Right ventricle myocardium superior (tissue), 1 donor: ENCODE measurements at regions of chr9 and their contacts with region 1.

Region 1: GRCh38 chr9:14768405-14769229 is 46.1 kb upstream of the CER1 start:
- DNase-seq: no peak
- ATAC-seq: peak; percentile 62

Region 2: DNA sequence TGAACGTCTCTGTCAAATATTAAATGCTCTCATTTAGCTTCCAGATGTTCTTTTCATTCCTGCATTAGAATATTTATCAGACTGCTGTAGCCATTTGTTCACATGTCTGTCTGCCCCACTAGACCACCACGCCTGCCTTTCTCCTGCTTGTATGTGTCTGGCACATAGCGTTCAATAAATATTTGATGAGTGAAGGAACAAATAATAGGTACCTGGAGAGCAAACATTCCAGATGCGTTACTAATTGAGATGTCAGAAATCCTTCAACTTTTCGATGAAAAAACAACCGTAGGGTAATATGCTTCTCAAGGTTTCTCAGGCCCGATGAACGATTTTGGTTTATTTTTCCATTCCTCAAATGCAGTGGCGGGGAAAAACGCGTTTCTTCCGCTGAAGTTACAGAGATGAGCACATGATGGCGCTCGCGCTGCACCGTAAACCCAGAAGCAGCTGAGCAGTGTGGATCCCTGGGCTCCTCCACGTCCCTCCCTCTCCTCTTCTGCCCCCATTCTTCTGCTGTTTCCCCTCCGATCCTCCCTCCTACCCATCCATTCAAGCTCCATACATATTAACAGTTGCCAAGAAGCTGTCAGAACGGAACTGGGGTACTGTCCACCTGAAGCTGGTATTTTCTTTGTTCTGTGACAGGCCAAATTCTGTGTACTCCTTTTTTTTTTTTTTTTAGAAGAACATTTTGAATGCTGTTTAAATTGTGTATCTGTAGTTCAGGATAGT is 1734.5 kb before region 1 on chr9:
- intact Hi-C with region 1: loop called (anchors 10 kb)
- DNase-seq: peak; percentile 69
- ATAC-seq: peak; percentile 93

Region 3: GRCh38 chr9:14466429-14466818 is 302.2 kb before region 1 on chr9:
- intact Hi-C with region 1: loop called (anchors 10 kb)
- DNase-seq: no peak
- ATAC-seq: no peak

Region 4: DNA sequence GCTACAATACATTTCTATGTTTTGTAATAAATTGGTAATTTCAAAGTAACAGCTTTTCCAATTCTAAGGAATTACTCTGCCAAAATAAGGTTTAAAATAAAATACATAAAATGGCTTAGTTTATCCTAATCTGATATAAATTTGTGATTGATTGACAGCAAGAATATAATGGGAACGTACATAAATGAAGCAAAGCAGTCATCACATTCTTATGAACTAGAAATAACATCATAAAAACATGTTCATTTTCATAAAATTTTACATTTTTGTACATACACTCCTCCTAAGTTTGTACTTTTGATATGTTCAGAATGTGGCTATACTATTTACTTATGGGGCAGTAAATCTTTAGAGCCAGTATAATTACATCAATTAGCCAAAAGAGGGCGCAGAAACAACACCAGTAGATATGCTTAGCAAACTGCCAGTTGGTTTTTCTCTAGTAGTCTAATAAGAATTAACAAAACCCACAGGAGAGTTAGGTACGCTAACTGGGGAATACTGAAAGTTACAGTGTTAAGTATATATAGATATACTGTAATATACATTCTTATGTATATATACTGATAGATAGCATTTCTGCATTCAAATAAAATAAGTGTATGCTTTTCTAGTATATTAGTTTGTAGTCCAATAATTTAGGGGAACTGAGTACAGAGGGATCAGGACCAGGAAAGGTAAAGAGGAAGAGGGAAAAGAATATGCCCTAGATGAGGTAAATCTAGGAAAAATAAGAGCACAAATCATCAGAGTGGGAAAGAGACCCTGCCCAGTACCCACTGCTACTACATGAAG is 152.2 kb before region 1 on chr9:
- intact Hi-C with region 1: loop called (anchors 5 kb)
- DNase-seq: no peak
- ATAC-seq: peak; percentile 65